Right ventricle myocardium inferior (tissue), 1 donor: ENCODE measurements at regions of chr12 and their contacts with region 1.

Region 1: GRCh38 chr12:110170535-110171185 is 46.5 kb downstream of the IFT81 start:
- DNase-seq: no peak
- ATAC-seq: peak; percentile 75

Region 2: GRCh38 chr12:109995686-109996482 is 174.8 kb before region 1 on chr12 and contains the start of gene GIT2:
- intact Hi-C with region 1: no loop called
- DNase-seq: peak; percentile 98
- ATAC-seq: peak; percentile 89
- total RNA-seq, gene GIT2: 47.1 TPM

Region 3: DNA sequence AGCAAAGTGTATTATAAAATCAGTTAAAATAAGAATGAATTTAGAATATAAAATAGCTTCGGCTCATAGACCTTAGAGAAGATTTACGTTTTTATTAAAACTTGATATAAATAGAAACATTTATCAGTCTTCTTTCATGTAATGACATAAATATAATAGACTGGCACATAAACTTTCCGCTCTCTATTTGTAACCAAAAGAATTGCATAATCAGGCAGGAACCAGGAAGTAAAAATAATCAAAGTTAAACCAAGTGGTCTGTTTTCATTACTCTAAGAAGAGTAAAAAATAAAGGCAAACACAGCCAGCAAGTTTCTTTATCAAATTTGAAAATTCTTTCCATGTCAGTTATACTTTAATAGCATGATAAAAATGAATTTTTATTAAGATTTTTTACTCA is 64.1 kb after region 1 on chr12:
- intact Hi-C with region 1: loop called (anchors 5 kb)
- DNase-seq: no peak
- ATAC-seq: no peak